OCI-LY7 (cell line): ENCODE measurements at regions of chr2 and their contacts with region 1.

Region 1: GRCh38 chr2:85420536-85421259 is 2.2 kb downstream of the SH2D6 start:
- DNase-seq: peak; percentile 87
- H3K4me3 ChIP-seq: no peak overlapping the region
- H3K27ac ChIP-seq: no peak overlapping the region
- H3K4me1 ChIP-seq: peaks cover 28% of the 10 kb centered on the region
- CTCF ChIP-seq: peak; percentile 98

Region 2: DNA sequence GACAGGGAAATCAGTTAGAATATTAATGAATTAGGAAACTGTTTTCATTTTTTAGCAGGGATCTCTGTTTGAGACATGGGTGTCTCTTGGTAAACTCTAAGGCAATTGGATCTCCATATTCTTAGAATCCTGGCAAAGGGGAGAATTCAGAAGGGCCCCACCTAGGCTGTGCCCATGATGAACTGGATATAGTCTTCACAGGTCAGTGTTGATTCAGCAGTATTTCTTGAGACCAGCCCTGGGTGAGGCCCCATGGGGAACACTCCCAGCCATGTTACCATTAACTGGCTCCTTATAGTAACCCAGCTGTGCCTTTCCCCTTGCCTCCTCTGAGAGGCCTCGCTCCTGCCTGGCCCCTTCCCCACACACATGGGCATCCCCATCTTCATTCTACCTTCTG is 210.8 kb before region 1 on chr2:
- CTCF ChIA-PET with region 1: no interaction called
- POLR2A ChIA-PET with region 1: no interaction called
- intact Hi-C with region 1: no loop called
- DNase-seq: no peak
- H3K4me3 ChIP-seq: no peak overlapping the region
- H3K27ac ChIP-seq: no peak overlapping the region
- H3K4me1 ChIP-seq: no peaks in the 10 kb centered on the region
- CTCF ChIP-seq: no peak

Region 3: GRCh38 chr2:85551698-85552678 is 131.3 kb after region 1 on chr2:
- CTCF ChIA-PET with region 1: interaction called, 8 read pairs
- POLR2A ChIA-PET with region 1: interaction called, 9 read pairs
- intact Hi-C with region 1: loop called (anchors 1 kb)
- DNase-seq: peak; percentile 83
- H3K4me3 ChIP-seq: no peak overlapping the region
- H3K27ac ChIP-seq: no peak overlapping the region
- H3K4me1 ChIP-seq: no peaks in the 10 kb centered on the region
- CTCF ChIP-seq: peak; percentile 96

Region 4: DNA sequence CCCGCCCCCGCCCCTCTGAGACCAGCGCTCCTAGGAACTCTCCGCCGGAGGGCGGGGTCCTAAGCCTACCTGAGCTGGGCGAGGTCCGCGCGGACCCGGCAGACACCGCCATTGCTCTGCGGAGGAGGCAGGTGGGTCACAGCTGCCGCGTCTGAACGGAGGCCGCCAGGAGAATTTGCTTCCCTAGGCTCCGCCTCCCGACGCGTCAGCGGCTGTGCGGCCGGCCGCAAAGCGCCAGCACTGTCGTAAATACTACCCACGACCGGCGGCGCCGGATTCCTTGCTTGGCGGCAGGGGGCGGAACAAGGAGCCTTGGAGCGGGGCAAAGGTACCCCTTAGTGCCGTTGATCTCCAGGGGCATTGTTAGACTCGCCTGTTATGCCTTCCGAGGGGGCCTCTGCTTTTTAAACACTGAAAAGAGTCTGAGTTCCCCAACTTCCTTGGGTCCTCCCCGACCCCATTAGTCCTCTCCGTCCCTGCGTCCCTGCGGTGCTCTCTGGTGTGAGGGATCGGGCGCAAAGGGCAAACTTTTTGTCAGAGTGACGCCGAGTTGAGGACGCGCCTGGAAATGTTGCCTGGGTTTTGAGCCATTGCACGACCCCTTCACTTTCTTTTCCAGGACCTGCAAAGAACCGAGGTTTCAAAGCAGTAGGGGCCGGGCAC is 140.8 kb after region 1 on chr2 and contains the start of gene GGCX:
- CTCF ChIA-PET with region 1: interaction called, 5 read pairs
- POLR2A ChIA-PET with region 1: interaction called, 14 read pairs
- intact Hi-C with region 1: no loop called
- DNase-seq: peak; percentile 98
- H3K4me3 ChIP-seq: peak within 1 kb of the TSS; percentile 79
- H3K27ac ChIP-seq: peak within 1 kb of the TSS; percentile 65
- H3K4me1 ChIP-seq: peaks cover 30% of the 10 kb centered on the region
- CTCF ChIP-seq: no peak
- total RNA-seq, gene GGCX: 16.5 and 33.3 TPM in 2 replicates